ENCODE measurements at regions of chr7 and their contacts with region 1.

Region 1: DNA sequence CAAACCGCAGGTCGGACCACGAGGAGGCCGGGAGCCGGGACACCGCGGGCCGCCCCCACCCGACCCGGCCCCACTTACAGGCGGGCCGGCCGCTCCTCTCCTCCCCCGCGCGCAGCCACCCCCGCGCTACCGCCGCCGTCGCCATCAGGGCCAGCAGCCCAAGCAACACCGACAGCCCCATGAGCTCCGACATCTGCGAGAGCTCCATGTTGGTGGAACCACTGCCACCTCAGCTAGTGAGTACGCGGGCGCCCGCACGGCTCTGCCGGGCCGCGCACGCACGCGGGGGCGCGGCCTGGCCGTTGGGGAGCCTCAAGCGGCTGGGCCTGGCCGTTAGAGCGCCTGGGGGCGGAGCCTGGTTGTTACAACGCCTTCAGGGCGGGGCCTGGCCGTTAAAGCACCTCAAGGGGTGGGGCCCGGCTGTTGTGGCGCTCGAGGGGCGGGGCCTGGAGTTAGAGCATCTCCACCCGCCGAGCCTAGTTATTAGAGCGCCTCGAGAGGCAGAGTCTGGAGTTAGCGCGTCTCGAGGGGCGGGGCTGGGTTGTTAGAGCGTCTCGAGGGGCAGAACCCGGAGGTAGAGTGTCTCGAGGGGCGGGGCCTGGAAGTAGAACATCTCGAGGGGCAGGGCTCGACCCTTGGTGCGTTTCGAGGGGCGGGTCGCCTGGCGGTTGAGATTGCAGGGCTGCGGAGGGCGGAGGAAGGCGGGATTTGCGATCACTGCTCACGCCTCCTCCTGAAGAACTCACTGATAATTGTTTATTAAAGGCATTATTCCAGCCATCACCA is at the start of gene TBL2:
- DNase-seq: peak; percentile 97 to 99 (median 98)
- H3K4me3 ChIP-seq: peak within 1 kb of the TSS; percentile 89
- H3K4me3 Mint-ChIP-seq: peak within 1 kb of the TSS; percentile 86 to 98 (median 93)
- H3K27ac ChIP-seq: peak within 1 kb of the TSS; percentile 91
- H3K27ac Mint-ChIP-seq: peak within 1 kb of the TSS; percentile 87 to 100 (median 97)
- H3K4me1 ChIP-seq: peaks cover 22% of the 10 kb centered on the region
- H3K4me1 Mint-ChIP-seq: peaks cover 17 to 39% (median 35%) of the 10 kb centered on the region in 3 donors
- H3K27me3 ChIP-seq: no peaks in the 10 kb centered on the region
- H3K27me3 Mint-ChIP-seq: no peaks in the 10 kb centered on the region
- total RNA-seq, gene TBL2: 29.1 to 31.3 TPM

Region 2: GRCh38 chr7:73522105-73522872 is 56.2 kb before region 1 on chr7 and contains the start of gene BAZ1B:
- CTCF ChIA-PET with region 1: interaction called, 6 read pairs
- POLR2A ChIA-PET with region 1: interaction called, 33 read pairs
- DNase-seq: peak; percentile 92 to 98 (median 94)
- H3K4me3 ChIP-seq: peak within 1 kb of the TSS; percentile 88
- H3K4me3 Mint-ChIP-seq: peak within 1 kb of the TSS; percentile 93 to 100 (median 99)
- H3K27ac ChIP-seq: peak within 1 kb of the TSS; percentile 87
- H3K27ac Mint-ChIP-seq: peak within 1 kb of the TSS; percentile 97 to 100 (median 99)
- H3K4me1 ChIP-seq: peaks cover 57% of the 10 kb centered on the region
- H3K4me1 Mint-ChIP-seq: peaks cover 64 to 71% (median 71%) of the 10 kb centered on the region in 3 donors
- H3K27me3 ChIP-seq: no peaks in the 10 kb centered on the region
- H3K27me3 Mint-ChIP-seq: peaks cover 0 to 3% of the 10 kb centered on the region in 2 donors
- total RNA-seq, gene BAZ1B: 112 to 118 TPM

Region 3: DNA sequence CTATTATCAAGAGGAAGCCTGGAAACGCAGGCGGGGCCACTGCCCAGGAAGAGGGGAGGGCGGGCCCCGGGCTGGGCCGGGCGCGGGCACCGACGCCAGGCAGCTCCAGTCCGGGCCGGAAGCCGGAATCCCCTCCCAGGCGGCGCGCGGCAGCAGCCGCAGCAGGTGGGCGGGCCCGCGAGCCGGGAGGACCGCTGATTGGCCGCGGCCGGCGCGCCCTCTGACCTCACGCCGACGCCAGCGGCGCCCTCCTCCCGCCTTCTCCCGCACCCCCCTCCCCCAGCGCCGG is 21.5 kb before region 1 on chr7:
- CTCF ChIA-PET with region 1: interaction called, 3 read pairs
- POLR2A ChIA-PET with region 1: interaction called, 34 read pairs
- DNase-seq: peak; percentile 90 to 93 (median 92)
- H3K4me3 ChIP-seq: peak overlapping the region; percentile 81
- H3K4me3 Mint-ChIP-seq: peak overlapping the region; percentile 86 to 93 (median 92)
- H3K27ac ChIP-seq: peak overlapping the region; percentile 94
- H3K27ac Mint-ChIP-seq: peak overlapping the region; percentile 86 to 96 (median 94)
- H3K4me1 ChIP-seq: peaks cover 25% of the 10 kb centered on the region
- H3K4me1 Mint-ChIP-seq: peaks cover 23 to 44% (median 32%) of the 10 kb centered on the region in 3 donors
- H3K27me3 ChIP-seq: no peaks in the 10 kb centered on the region
- H3K27me3 Mint-ChIP-seq: peaks cover 0 to 3% of the 10 kb centered on the region in 2 donors

Region 4: GRCh38 chr7:73738612-73739374 is 160.3 kb after region 1 on chr7 and contains the start of gene ABHD11:
- CTCF ChIA-PET with region 1: interaction called, 5 read pairs
- POLR2A ChIA-PET with region 1: interaction called, 10 read pairs
- DNase-seq: peak; percentile 97 to 98 (median 97)
- H3K4me3 ChIP-seq: peak within 1 kb of the TSS; percentile 83
- H3K4me3 Mint-ChIP-seq: peak within 1 kb of the TSS; percentile 87 to 97 (median 92)
- H3K27ac ChIP-seq: peak within 1 kb of the TSS; percentile 87
- H3K27ac Mint-ChIP-seq: peak within 1 kb of the TSS; percentile 82 to 97 (median 92)
- H3K4me1 ChIP-seq: peaks cover 9% of the 10 kb centered on the region
- H3K4me1 Mint-ChIP-seq: peaks cover 11 to 24% (median 16%) of the 10 kb centered on the region in 3 donors
- H3K27me3 ChIP-seq: no peaks in the 10 kb centered on the region
- H3K27me3 Mint-ChIP-seq: peaks cover 0 to 2% of the 10 kb centered on the region in 2 donors
- total RNA-seq, gene ABHD11: 23.2 to 26.5 TPM

Measured in CD8-positive, alpha-beta memory T cell (primary cell).